Stomach (tissue), 19 donors: ENCODE measurements at regions of chr14 and their contacts with region 1.

Region 1: DNA sequence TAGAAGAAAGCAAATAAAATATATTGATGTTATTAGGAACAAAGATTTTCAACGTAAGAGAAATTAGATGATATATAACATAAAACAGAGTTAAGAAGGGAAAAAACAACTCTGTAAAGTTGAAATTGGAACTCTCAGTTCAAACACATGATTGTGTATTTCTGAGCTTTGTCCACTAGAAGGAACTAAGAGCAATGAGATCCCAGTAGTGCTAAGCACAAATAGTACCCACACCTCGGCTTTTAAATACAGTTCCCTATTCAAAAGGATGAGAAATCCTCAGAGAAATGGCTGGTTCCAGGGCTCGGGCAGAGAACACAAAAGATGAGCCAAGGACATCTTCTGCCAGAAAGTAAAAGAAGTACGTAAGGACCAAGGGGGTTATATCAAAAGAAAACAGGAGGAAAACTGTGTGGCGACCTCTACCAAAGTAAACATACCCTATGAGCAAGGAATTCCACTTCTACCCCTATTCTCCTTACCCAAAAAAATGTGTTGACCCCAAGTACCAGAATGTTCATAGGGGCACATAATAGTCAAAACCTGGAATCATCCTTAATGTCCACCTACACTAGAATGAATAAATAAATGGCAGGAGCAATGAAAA is 96.6 kb downstream of the SPTSSA start:
- DNase-seq: peak in 1 of 2 donors; percentile 47
- H3K4me3 ChIP-seq: no peak overlapping the region
- H3K27ac ChIP-seq: no peak overlapping the region
- H3K4me1 ChIP-seq: peaks cover 8 to 39% (median 19%) of the 10 kb centered on the region in 4 donors
- H3K27me3 ChIP-seq: no peaks in the 10 kb centered on the region
- CTCF ChIP-seq: peak in 5 of 7 experiments; percentile 14 to 53 (median 20)
- EP300 ChIP-seq: no peak
- POLR2A ChIP-seq: no peak

Region 2: GRCh38 chr14:34180460-34180868 is 184.9 kb before region 1 on chr14:
- intact Hi-C with region 1: no loop called
- DNase-seq: peak in 1 of 2 donors; percentile 23
- H3K4me3 ChIP-seq: no peak overlapping the region
- H3K27ac ChIP-seq: peak overlapping the region in 1 of 5 donors; percentile 51
- H3K4me1 ChIP-seq: peaks cover 11 to 21% (median 17%) of the 10 kb centered on the region in 4 donors
- H3K27me3 ChIP-seq: no peaks in the 10 kb centered on the region
- CTCF ChIP-seq: no peak
- EP300 ChIP-seq: no peak
- POLR2A ChIP-seq: no peak

Region 3: GRCh38 chr14:34502494-34503225 is 137.2 kb after region 1 on chr14:
- intact Hi-C with region 1: loop called (anchors 10 kb)
- DNase-seq: no peak
- H3K4me3 ChIP-seq: no peak overlapping the region
- H3K27ac ChIP-seq: no peak overlapping the region
- H3K4me1 ChIP-seq: peaks cover 0 to 6% (median 2%) of the 10 kb centered on the region in 4 donors
- H3K27me3 ChIP-seq: no peaks in the 10 kb centered on the region
- CTCF ChIP-seq: no peak
- EP300 ChIP-seq: no peak
- POLR2A ChIP-seq: no peak